Naive thymus-derived CD4-positive, alpha-beta T cell (primary cell): ENCODE measurements at regions of chr7 and their contacts with region 1.

Region 1: GRCh38 chr7:55255496-55256435 is 109.4 kb upstream of the LANCL2 start:
- DNase-seq: peak; percentile 33 to 81 (median 56)
- ATAC-seq: peak; percentile 90
- H3K4me3 ChIP-seq: peak overlapping the region; percentile 58
- H3K4me3 Mint-ChIP-seq: peak overlapping the region; percentile 81 to 94 (median 91)
- H3K27ac ChIP-seq: no peak overlapping the region
- H3K27ac Mint-ChIP-seq: peak overlapping the region in 4 of 9 donors; percentile 30 to 80 (median 59)
- H3K4me1 ChIP-seq: peaks cover 0 to 3% of the 10 kb centered on the region in 2 donors
- H3K4me1 Mint-ChIP-seq: peaks cover 0 to 17% (median 7%) of the 10 kb centered on the region in 7 donors
- H3K27me3 ChIP-seq: peaks cover 0 to 3% of the 10 kb centered on the region in 2 donors
- H3K27me3 Mint-ChIP-seq: peaks cover 48 to 63% (median 51%) of the 10 kb centered on the region in 5 donors

Region 2: GRCh38 chr7:54773472-54774399 is 482.0 kb before region 1 on chr7:
- CTCF ChIA-PET with region 1: interaction called, 9 read pairs
- POLR2A ChIA-PET with region 1: no interaction called
- intact Hi-C with region 1: loop called in 1 of 2 experiments (anchors 1 kb)
- DNase-seq: peak; percentile 18 to 67 (median 49)
- ATAC-seq: peak; percentile 94
- H3K4me3 ChIP-seq: peak overlapping the region; percentile 50
- H3K4me3 Mint-ChIP-seq: peak overlapping the region; percentile 60 to 86 (median 79)
- H3K27ac ChIP-seq: no peak overlapping the region
- H3K27ac Mint-ChIP-seq: peak overlapping the region in 7 of 9 donors; percentile 22 to 79 (median 66)
- H3K4me1 ChIP-seq: no peaks in the 10 kb centered on the region
- H3K4me1 Mint-ChIP-seq: peaks cover 0 to 11% (median 4%) of the 10 kb centered on the region in 7 donors
- H3K27me3 ChIP-seq: no peaks in the 10 kb centered on the region
- H3K27me3 Mint-ChIP-seq: peaks cover 8 to 36% (median 35%) of the 10 kb centered on the region in 5 donors

Region 3: GRCh38 chr7:55086413-55087201 is 169.2 kb before region 1 on chr7:
- CTCF ChIA-PET with region 1: no interaction called
- POLR2A ChIA-PET with region 1: no interaction called
- intact Hi-C with region 1: loop called in 1 of 2 experiments (anchors 10 kb)
- DNase-seq: peak in 1 of 9 donors; percentile 38
- ATAC-seq: peak; percentile 42
- H3K4me3 ChIP-seq: no peak overlapping the region
- H3K4me3 Mint-ChIP-seq: peak overlapping the region in 8 of 10 donors; percentile 11 to 61 (median 46)
- H3K27ac ChIP-seq: no peak overlapping the region
- H3K27ac Mint-ChIP-seq: peak overlapping the region in 2 of 9 donors; percentile 7 to 22
- H3K4me1 ChIP-seq: peaks cover 0 to 5% of the 10 kb centered on the region in 2 donors
- H3K4me1 Mint-ChIP-seq: peaks cover 6 to 21% (median 15%) of the 10 kb centered on the region in 7 donors
- H3K27me3 ChIP-seq: no peaks in the 10 kb centered on the region
- H3K27me3 Mint-ChIP-seq: peaks cover 0 to 19% (median 8%) of the 10 kb centered on the region in 5 donors

Region 4: DNA sequence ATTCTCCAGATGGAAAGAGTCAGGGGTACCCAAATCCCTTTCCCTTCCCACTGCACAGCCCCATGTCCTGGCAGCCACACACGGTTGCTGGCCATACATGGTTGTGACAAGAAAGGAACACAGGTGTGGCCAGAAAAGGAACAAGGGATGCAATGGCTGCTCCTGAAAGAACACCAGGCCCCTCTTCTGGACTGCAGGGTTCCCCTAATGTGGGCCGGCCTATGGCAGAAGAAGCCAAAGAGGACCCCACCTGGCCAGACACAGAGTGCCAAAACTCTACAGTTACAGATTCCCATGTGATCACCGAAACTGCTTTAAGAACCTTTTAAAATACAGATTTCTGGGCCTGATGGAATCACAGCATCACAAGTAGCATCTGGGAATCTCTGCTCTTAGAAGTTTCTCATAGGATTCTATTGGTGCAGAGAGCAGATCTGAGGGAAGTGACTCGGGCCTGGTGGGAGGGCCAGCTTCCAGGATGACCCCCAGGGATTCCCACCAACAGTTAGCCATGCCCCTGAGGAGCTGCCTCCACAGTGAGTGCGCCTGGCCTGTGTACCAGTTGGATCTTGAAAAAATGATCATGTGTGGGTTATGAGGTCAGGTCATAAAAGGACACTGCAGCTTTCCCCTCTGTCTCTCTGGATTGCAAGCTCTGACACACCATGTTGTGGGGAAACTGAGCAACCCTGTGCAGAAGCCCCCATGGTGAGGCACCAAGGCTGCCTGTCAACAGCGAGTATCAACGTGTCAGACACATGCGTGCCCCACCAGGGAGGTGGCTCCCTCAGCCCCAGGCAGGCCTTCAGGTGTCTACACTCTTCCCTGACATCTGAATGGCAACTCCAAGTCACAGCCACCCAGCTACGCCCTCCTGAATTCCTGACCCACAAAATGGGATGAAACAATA is 19.8 kb after region 1 on chr7:
- CTCF ChIA-PET with region 1: no interaction called
- POLR2A ChIA-PET with region 1: no interaction called
- intact Hi-C with region 1: no loop called
- DNase-seq: no peak
- ATAC-seq: no peak
- H3K4me3 ChIP-seq: no peak overlapping the region
- H3K4me3 Mint-ChIP-seq: no peak overlapping the region
- H3K27ac ChIP-seq: no peak overlapping the region
- H3K27ac Mint-ChIP-seq: no peak overlapping the region
- H3K4me1 ChIP-seq: no peaks in the 10 kb centered on the region
- H3K4me1 Mint-ChIP-seq: peaks cover 0 to 2% (median 0%) of the 10 kb centered on the region in 7 donors
- H3K27me3 ChIP-seq: no peaks in the 10 kb centered on the region
- H3K27me3 Mint-ChIP-seq: peaks cover 5 to 11% (median 7%) of the 10 kb centered on the region in 5 donors